Right cardiac atrium (tissue), 5 donors: ENCODE measurements at regions of chr7 and their contacts with region 1.

Region 1: GRCh38 chr7:84194543-84195271 is at the start of gene SEMA3A:
- DNase-seq: peak; percentile 20 to 42 (median 38)
- ATAC-seq: peak; percentile 89 to 94
- H3K4me3 ChIP-seq: peak within 1 kb of the TSS; percentile 63
- H3K27ac ChIP-seq: peak within 1 kb of the TSS; percentile 44
- H3K4me1 ChIP-seq: no peaks in the 10 kb centered on the region
- H3K27me3 ChIP-seq: no peaks in the 10 kb centered on the region
- total RNA-seq, gene SEMA3A: 7.4 to 22.4 (median 11.5) TPM

Region 2: GRCh38 chr7:84149573-84149972 is 45.1 kb before region 1 on chr7:
- intact Hi-C with region 1: no loop called
- DNase-seq: no peak
- ATAC-seq: no peak
- H3K4me3 ChIP-seq: no peak overlapping the region
- H3K27ac ChIP-seq: no peak overlapping the region
- H3K4me1 ChIP-seq: no peaks in the 10 kb centered on the region
- H3K27me3 ChIP-seq: no peaks in the 10 kb centered on the region

Region 3: GRCh38 chr7:84317536-84317935 is 122.8 kb after region 1 on chr7:
- intact Hi-C with region 1: loop called in 1 of 4 experiments (anchors 10 kb)
- DNase-seq: no peak
- ATAC-seq: no peak
- H3K4me3 ChIP-seq: no peak overlapping the region
- H3K27ac ChIP-seq: no peak overlapping the region
- H3K4me1 ChIP-seq: no peaks in the 10 kb centered on the region
- H3K27me3 ChIP-seq: no peaks in the 10 kb centered on the region